ENCODE measurements at regions of chr3 and their contacts with region 1.

Region 1: GRCh38 chr3:139329345-139329850 is 14.4 kb upstream of the MRPS22 start:
- DNase-seq: peak; percentile 89 to 90 (median 90)
- ATAC-seq: peak; percentile 98 to 100 (median 100)
- H3K4me3 ChIP-seq: no peak overlapping the region
- H3K27ac ChIP-seq: no peak overlapping the region
- H3K4me1 ChIP-seq: no peaks in the 10 kb centered on the region
- H3K27me3 ChIP-seq: no peaks in the 10 kb centered on the region
- CTCF ChIP-seq: peak; percentile 99 to 100 (median 99)
- POLR2A ChIP-seq: no peak

Region 2: GRCh38 chr3:138935848-138936740 is 393.3 kb before region 1 on chr3:
- intact Hi-C with region 1: loop called (anchors 5 to 10 kb)
- DNase-seq: peak; percentile 78 to 81 (median 79)
- ATAC-seq: peak; percentile 88 to 93 (median 92)
- H3K4me3 ChIP-seq: peak overlapping the region in 2 of 3 donors; percentile 25 to 48
- H3K27ac ChIP-seq: no peak overlapping the region
- H3K4me1 ChIP-seq: peaks cover 0 to 35% (median 5%) of the 10 kb centered on the region in 4 donors
- H3K27me3 ChIP-seq: peaks cover 16 to 40% of the 10 kb centered on the region in 2 donors
- CTCF ChIP-seq: peak; percentile 82 to 97 (median 94)
- POLR2A ChIP-seq: no peak

Region 3: DNA sequence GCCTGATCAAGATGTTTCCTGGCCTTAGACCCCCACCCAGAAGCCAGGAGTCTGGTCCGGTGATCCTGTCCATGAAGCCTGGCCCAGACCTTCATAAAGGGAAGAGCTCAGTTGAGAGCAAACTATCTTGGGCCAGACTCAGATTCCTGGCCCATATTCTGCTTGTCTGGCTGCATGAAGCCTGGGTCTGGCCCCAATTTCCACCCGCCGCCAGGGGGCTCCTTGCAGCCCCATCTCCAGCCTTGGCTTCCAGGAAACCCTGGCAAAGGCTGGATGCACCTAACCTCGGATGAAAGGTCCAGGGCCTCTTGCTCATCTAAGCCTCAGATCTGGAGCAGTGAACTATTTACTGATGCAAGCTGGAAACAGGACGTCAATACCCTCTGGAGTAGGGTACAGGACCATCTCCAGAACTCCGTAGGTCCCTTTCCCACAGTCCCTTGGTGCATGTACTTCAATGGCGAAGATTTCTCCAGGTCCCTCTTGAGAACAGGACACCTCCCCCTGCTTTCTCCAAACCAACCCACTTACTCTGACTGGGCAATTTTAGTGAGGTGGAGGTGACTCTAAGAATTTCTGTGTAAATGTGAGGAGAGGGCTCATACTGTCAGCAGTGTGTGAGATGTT is 388.0 kb before region 1 on chr3:
- intact Hi-C with region 1: loop called (anchors 5 to 10 kb)
- DNase-seq: peak in 2 of 3 donors; percentile 53 to 61
- ATAC-seq: peak; percentile 43 to 69 (median 56)
- H3K4me3 ChIP-seq: no peak overlapping the region
- H3K27ac ChIP-seq: no peak overlapping the region
- H3K4me1 ChIP-seq: peaks cover 0 to 48% (median 4%) of the 10 kb centered on the region in 4 donors
- H3K27me3 ChIP-seq: peaks cover 26 to 84% of the 10 kb centered on the region in 2 donors
- CTCF ChIP-seq: peak; percentile 38 to 49 (median 44)
- POLR2A ChIP-seq: no peak

Region 4: GRCh38 chr3:139111392-139112229 is 217.8 kb before region 1 on chr3:
- intact Hi-C with region 1: loop called (anchors 5 to 10 kb)
- DNase-seq: peak; percentile 73 to 75 (median 73)
- ATAC-seq: peak; percentile 74 to 78 (median 74)
- H3K4me3 ChIP-seq: no peak overlapping the region
- H3K27ac ChIP-seq: no peak overlapping the region
- H3K4me1 ChIP-seq: peaks cover 0 to 14% (median 5%) of the 10 kb centered on the region in 4 donors
- H3K27me3 ChIP-seq: no peaks in the 10 kb centered on the region
- CTCF ChIP-seq: peak; percentile 61 to 79 (median 66)
- POLR2A ChIP-seq: no peak

Measured in right lobe of liver (tissue), 6 donors.